H1 (cell line): ENCODE measurements at regions of chr11 and their contacts with region 1.

Region 1: GRCh38 chr11:128603752-128604414 is 16.5 kb upstream of the ETS1 start:
- DNase-seq: no peak
- H3K4me3 ChIP-seq: no peak overlapping the region
- H3K27ac ChIP-seq: no peak overlapping the region
- H3K4me1 ChIP-seq: peaks cover 0 to 4% (median under 1%) of the 10 kb centered on the region in 4 experiments; a peak in 4 of 7 replicates
- H3K27me3 ChIP-seq: no peaks in the 10 kb centered on the region
- CTCF ChIP-seq: peak in 2 of 3 experiments; percentile 3 to 19; a peak in 2 of 4 replicates
- EP300 ChIP-seq: no peak
- POLR2A ChIP-seq: no peak
- RAD21 ChIP-seq: peak; percentile 55 to 64

Region 2: DNA sequence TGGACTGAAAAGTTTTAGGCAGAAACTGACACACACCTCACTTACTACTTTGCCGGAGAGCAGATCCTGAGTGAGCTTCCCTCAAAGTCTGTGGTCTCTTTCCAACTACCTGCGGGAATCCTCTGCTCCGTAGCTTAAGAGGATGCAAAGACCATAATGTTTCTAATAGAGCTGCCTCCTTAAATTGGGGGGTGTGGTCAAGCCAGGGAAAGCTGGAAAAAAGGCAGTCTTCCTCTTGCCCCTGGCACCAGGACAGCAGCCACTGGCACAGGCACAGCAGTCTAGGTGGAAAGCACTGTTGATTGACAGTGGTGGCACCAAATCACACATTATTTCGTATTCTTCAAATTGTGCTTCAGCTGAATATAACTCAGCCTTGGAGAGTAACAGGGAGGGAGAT is 16.4 kb before region 1 on chr11 and contains the start of gene ETS1:
- CTCF ChIA-PET with region 1: interaction called, 10 read pairs
- POLR2A ChIA-PET with region 1: interaction called, 10 read pairs
- DNase-seq: no peak
- H3K4me3 ChIP-seq: peak within 1 kb of the TSS; percentile 40 to 62 (median 49)
- H3K27ac ChIP-seq: no peak within 1 kb of the TSS
- H3K4me1 ChIP-seq: peaks cover 0 to 23% (median 15%) of the 10 kb centered on the region in 4 experiments; a peak in 6 of 7 replicates
- H3K27me3 ChIP-seq: no peaks in the 10 kb centered on the region; a peak in 1 of 7 replicates
- CTCF ChIP-seq: no peak
- EP300 ChIP-seq: no peak
- POLR2A ChIP-seq: peak; percentile 38 to 49; a peak in 2 of 3 replicates
- RAD21 ChIP-seq: no peak; a peak in 2 of 4 replicates
- total RNA-seq, gene ETS1: 33.7 and 35.3 TPM in 2 replicates

Region 3: DNA sequence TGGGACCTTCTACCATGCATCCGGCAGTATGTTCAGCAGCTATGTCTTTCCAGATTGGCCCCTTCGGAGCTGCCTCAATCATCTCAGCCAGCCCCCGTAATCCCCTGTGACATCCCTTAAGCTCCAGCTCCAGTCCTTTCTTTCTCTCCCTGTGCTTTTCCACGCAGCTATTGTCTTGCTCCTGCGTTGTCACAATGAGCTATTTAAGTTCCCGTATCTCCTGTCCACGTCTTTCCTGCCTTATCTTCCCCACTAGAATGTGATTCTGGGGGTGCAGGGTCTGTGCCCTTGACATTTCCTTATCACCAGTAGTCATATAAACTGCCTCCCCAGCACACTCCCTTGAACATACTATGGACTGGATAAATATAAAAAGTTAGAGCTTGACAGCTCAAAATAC is 11.4 kb before region 1 on chr11:
- CTCF ChIA-PET with region 1: interaction called, 10 read pairs
- POLR2A ChIA-PET with region 1: interaction called, 10 read pairs
- DNase-seq: no peak
- H3K4me3 ChIP-seq: no peak overlapping the region
- H3K27ac ChIP-seq: no peak overlapping the region
- H3K4me1 ChIP-seq: peaks cover 1 to 15% (median 13%) of the 10 kb centered on the region in 4 experiments; a peak in 6 of 7 replicates
- H3K27me3 ChIP-seq: no peaks in the 10 kb centered on the region; a peak in 1 of 7 replicates
- CTCF ChIP-seq: no peak
- EP300 ChIP-seq: no peak
- POLR2A ChIP-seq: no peak
- RAD21 ChIP-seq: no peak

Region 4: GRCh38 chr11:129131316-129131715 is 527.4 kb after region 1 on chr11:
- CTCF ChIA-PET with region 1: no interaction called
- POLR2A ChIA-PET with region 1: no interaction called
- DNase-seq: no peak
- H3K4me3 ChIP-seq: no peak overlapping the region
- H3K27ac ChIP-seq: no peak overlapping the region
- H3K4me1 ChIP-seq: no peaks in the 10 kb centered on the region
- H3K27me3 ChIP-seq: no peaks in the 10 kb centered on the region
- CTCF ChIP-seq: no peak
- EP300 ChIP-seq: no peak
- POLR2A ChIP-seq: no peak
- RAD21 ChIP-seq: no peak